Thyroid gland (tissue), 4 donors: ENCODE measurements at regions of chrX and their contacts with region 1.

Region 1: GRCh38 chrX:50691820-50692219 is 122.2 kb downstream of the SHROOM4 start:
- DNase-seq: no peak
- H3K4me3 ChIP-seq: no peak overlapping the region
- H3K27ac ChIP-seq: no peak overlapping the region
- H3K4me1 ChIP-seq: no peaks in the 10 kb centered on the region
- H3K27me3 ChIP-seq: no peaks in the 10 kb centered on the region
- CTCF ChIP-seq: peak in 5 of 6 experiments; percentile 49 to 68 (median 63)
- POLR2A ChIP-seq: no peak

Region 2: DNA sequence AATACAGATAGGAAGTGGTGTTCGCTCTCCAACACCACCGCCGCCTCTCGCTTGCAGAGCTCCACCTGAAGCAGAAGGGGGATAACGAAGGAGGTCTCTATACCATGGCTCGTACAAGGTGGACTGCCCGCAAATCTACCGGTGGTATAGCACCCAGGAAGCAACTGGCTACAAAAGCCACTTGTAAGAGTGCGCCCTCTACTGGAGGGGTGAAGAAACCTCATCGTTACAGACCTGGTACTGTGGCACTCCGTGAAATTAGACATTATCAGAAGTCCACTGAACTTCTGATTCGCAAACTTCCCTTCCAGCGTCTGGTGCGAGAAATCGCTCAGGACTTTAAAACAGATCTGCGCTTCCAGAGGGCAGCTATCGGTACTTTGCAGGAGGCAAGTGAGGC is 213.5 kb after region 1 on chrX:
- intact Hi-C with region 1: loop called (anchors 5 kb)
- DNase-seq: no peak
- H3K4me3 ChIP-seq: no peak overlapping the region
- H3K27ac ChIP-seq: no peak overlapping the region
- H3K4me1 ChIP-seq: no peaks in the 10 kb centered on the region
- H3K27me3 ChIP-seq: no peaks in the 10 kb centered on the region
- CTCF ChIP-seq: no peak
- POLR2A ChIP-seq: no peak